ENCODE measurements at regions of chr17 and their contacts with region 1.

Region 1: DNA sequence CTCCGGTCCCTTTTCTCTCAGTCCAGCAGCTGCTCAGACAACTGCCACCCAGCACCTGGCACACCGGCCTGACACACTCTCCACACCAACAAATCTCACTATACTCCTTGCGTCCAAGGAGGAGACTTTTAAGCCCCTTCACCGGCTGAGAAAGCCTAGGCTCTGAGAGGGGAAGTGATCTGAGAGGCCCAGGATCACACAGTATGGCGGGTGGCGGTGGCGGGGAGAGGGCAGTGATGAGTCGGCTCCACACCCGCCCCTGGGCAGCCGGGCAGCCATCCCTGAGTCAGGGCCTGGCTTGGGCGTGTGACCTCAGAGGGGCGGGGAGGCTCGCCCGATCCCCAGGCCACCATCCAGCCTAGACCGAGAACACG is 569 bp downstream of the FLII start:
- DNase-seq: peak; percentile 83
- H3K4me3 ChIP-seq: peak overlapping the region; percentile 38 to 99 (median 62)
- H3K27ac ChIP-seq: peak overlapping the region; percentile 84 to 97 (median 95)
- H3K4me1 ChIP-seq: peaks cover 38 to 50% of the 10 kb centered on the region in 2 donors
- H3K27me3 ChIP-seq: no peaks in the 10 kb centered on the region
- CTCF ChIP-seq: no peak
- POLR2A ChIP-seq: peak in 1 of 2 donors; percentile 6

Region 2: GRCh38 chr17:18291718-18292540 is 34.0 kb after region 1 on chr17:
- intact Hi-C with region 1: no loop called
- DNase-seq: no peak
- H3K4me3 ChIP-seq: no peak overlapping the region
- H3K27ac ChIP-seq: no peak overlapping the region
- H3K4me1 ChIP-seq: no peaks in the 10 kb centered on the region
- H3K27me3 ChIP-seq: no peaks in the 10 kb centered on the region
- CTCF ChIP-seq: no peak
- POLR2A ChIP-seq: no peak

Region 3: GRCh38 chr17:18314731-18315561 is 57.0 kb after region 1 on chr17 and contains the starts of genes SMCR8 and TOP3A:
- intact Hi-C with region 1: loop called (anchors 5 kb)
- DNase-seq: peak; percentile 99
- H3K4me3 ChIP-seq: peak within 1 kb of the TSS; percentile 50 to 90 (median 83)
- H3K27ac ChIP-seq: peak within 1 kb of the TSS; percentile 69 to 87 (median 73)
- H3K4me1 ChIP-seq: peaks cover 30 to 52% of the 10 kb centered on the region in 2 donors
- H3K27me3 ChIP-seq: no peaks in the 10 kb centered on the region
- CTCF ChIP-seq: peak in 1 of 6 experiments; percentile 21
- POLR2A ChIP-seq: peak in 1 of 2 donors; percentile 63
- total RNA-seq, gene SMCR8: 16.7 to 28.3 (median 19.6) TPM
- total RNA-seq, gene TOP3A: 31.3 to 34.5 (median 32.5) TPM

Measured in thyroid gland (tissue), 4 donors.